ENCODE measurements at regions of chr12 and their contacts with region 1.

Region 1: GRCh38 chr12:96375841-96376604 is 24.2 kb downstream of the CDK17 start:
- DNase-seq: no peak
- H3K4me3 Mint-ChIP-seq: no peak overlapping the region
- H3K27ac Mint-ChIP-seq: peak overlapping the region; percentile 96
- H3K4me1 Mint-ChIP-seq: peaks cover 82% of the 10 kb centered on the region
- H3K27me3 Mint-ChIP-seq: no peaks in the 10 kb centered on the region

Region 2: DNA sequence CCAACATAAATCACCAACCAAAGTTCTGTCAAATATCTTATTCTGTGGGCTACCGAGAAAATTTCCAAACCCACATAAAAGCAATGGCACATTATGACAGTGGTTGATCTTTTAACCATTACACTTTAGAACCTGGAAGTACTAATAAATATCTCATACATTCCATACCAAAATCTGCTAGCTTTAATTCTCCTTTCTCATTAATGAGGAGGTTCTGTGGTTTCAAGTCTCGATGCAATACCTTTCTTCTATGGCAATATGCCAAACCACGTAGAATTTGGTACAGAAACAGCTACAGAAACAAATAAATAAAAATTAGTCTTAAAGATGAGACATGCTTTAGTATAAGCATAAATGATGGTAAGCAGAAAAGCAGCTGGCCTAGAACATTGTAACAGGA is 81.2 kb before region 1 on chr12:
- CTCF ChIA-PET with region 1: no interaction called
- intact Hi-C with region 1: loop called (anchors 2 kb)
- DNase-seq: no peak
- H3K4me3 Mint-ChIP-seq: no peak overlapping the region
- H3K27ac Mint-ChIP-seq: no peak overlapping the region
- H3K4me1 Mint-ChIP-seq: peaks cover 26% of the 10 kb centered on the region
- H3K27me3 Mint-ChIP-seq: no peaks in the 10 kb centered on the region

Region 3: DNA sequence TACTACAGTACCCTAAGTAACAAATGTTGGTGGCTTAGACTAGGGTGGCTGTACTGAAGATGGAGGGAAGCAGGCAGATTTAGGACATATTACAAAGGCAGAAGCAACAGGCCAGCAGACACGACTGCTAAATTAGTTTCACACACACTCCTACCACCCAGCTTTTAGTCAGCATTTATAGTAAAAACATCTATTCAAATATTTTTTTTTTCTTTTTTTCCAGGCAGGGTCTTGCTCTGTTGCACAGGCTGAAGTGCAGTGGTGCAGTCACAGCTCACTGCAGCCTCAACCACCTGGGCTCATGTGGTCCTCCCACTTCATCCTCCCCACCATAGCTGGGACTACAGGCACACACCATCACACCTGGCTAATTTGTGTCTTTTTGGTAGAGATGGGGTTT is 48.7 kb before region 1 on chr12:
- CTCF ChIA-PET with region 1: no interaction called
- intact Hi-C with region 1: loop called (anchors 2 kb)
- DNase-seq: no peak
- H3K4me3 Mint-ChIP-seq: no peak overlapping the region
- H3K27ac Mint-ChIP-seq: peak overlapping the region; percentile 65
- H3K4me1 Mint-ChIP-seq: peaks cover 49% of the 10 kb centered on the region
- H3K27me3 Mint-ChIP-seq: no peaks in the 10 kb centered on the region

Region 4: GRCh38 chr12:96335270-96335669 is 40.8 kb before region 1 on chr12:
- CTCF ChIA-PET with region 1: interaction called, 4 read pairs
- intact Hi-C with region 1: loop called (anchors 1 kb)
- DNase-seq: peak; percentile 34
- H3K4me3 Mint-ChIP-seq: no peak overlapping the region
- H3K27ac Mint-ChIP-seq: peak overlapping the region; percentile 65
- H3K4me1 Mint-ChIP-seq: peaks cover 39% of the 10 kb centered on the region
- H3K27me3 Mint-ChIP-seq: no peaks in the 10 kb centered on the region

Region 5: GRCh38 chr12:96427269-96427729 is 51.3 kb after region 1 on chr12:
- CTCF ChIA-PET with region 1: no interaction called
- intact Hi-C with region 1: loop called (anchors 1 kb)
- DNase-seq: peak; percentile 81
- H3K4me3 Mint-ChIP-seq: no peak overlapping the region
- H3K27ac Mint-ChIP-seq: peak overlapping the region; percentile 74
- H3K4me1 Mint-ChIP-seq: peaks cover 42% of the 10 kb centered on the region
- H3K27me3 Mint-ChIP-seq: no peaks in the 10 kb centered on the region

Region 6: DNA sequence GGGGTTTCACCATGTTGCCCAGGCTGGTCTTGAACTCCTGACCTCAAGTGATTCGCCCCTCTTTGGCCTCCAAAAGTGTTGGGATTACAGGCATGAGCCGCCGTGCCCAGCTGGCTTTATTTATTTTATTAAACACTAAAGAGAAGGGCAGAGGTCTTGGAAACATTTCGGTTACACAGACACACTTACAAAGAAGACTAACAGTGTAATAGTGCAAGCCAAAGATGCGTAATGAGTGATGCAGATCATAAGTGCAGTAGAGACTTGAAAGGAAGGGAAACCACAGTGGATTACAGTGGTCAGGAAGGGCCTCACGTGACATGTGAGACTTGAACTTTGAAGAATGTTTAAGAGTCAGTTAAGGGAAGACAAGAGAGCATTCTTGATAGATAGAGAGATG is 58.1 kb after region 1 on chr12:
- CTCF ChIA-PET with region 1: no interaction called
- intact Hi-C with region 1: loop called (anchors 1 kb)
- DNase-seq: peak; percentile 91
- H3K4me3 Mint-ChIP-seq: no peak overlapping the region
- H3K27ac Mint-ChIP-seq: peak overlapping the region; percentile 48
- H3K4me1 Mint-ChIP-seq: peaks cover 17% of the 10 kb centered on the region
- H3K27me3 Mint-ChIP-seq: no peaks in the 10 kb centered on the region

Region 7: DNA sequence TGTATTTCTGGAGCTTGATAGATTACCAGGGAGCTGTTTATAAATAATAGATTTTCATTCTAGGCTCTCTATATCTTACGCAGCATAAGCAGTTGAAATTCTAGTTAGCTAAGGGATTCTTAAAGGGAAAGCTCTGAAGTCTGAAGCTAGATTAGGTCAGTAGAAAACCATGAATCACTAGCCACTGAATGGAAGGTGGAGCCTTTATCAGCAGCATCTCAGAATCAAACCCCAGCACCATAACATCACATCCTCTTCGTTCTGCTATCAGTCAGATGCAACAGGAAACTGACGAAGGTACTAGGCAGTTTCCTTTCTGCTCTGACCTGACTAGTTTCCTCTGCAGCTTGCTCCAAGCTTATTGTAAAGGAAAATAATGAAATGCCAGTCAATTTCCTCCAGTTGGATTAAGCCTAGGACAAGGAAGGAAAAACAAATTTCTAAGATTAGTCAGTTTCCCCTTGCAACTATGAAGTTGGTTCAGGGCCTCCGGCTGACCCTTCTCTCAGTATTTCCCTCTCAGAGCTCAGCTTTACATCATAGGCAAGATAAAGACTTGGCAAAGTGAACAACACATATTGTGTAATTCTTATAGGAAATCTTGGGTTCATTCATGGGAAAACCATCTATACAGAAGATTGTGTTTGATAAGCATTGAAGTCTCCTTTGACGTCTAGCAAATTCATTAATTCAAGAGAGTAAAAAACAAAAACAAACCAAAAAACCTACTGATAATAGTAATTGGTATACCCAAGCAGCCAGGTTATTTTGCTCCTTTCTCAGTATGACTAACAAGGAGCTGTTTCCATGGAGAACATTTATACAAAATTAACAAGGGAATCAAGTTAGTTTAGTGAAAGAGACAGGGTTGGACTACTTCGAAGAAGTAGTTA is 69.9 kb after region 1 on chr12:
- CTCF ChIA-PET with region 1: no interaction called
- intact Hi-C with region 1: loop called (anchors 1 kb)
- DNase-seq: peak; percentile 68
- H3K4me3 Mint-ChIP-seq: peak overlapping the region; percentile 28
- H3K27ac Mint-ChIP-seq: peak overlapping the region; percentile 94
- H3K4me1 Mint-ChIP-seq: peaks cover 39% of the 10 kb centered on the region
- H3K27me3 Mint-ChIP-seq: no peaks in the 10 kb centered on the region

Measured in activated naive CD4-positive, alpha-beta T cell treated with anti-CD3 and anti-CD28 coated beads for 36 hours (primary cell).